Posterior vena cava (tissue), 2 donors: ENCODE measurements at regions of chr2 and their contacts with region 1.

Region 1: DNA sequence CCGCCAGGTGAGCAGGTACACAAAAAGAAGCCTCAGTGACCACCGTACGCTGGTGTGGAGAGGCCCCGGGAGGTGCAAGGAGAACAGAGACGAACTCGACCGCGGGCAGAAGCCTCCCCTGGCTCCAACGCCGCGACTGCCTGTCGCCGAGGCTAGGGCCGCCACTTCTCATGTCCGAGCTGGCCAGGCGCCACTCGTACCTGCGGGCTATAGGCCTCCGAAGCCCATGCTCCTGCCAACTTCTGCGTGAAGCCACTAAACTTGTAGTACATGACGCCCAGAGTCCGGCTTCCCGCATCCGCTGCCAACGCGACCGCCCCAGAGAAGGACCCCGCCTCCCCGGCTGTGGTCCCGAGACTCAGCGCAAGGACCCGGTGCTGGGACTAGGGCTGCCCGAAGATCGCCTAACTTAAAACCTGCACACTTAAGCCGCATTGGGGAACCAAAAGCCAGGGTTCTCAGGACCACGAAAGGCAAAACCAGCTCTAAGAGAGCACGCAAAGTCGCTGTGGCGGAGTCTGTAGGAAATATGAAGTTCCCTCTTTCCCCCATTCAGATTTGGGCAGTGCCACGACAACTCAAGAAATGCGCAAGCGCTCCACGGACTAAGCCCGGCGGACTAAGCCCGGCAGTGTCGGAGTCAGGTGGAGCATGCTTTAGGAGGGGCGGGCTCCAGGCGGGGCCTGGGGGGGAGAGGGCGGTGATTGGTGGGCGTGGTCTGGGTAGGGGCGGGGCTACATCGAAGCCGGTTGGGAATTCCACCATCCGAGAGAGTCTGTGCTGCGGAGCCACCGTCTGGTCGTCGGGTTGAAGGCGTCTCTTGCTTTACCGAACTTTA is at the start of gene COX7A2L:
- DNase-seq: peak; percentile 99
- total RNA-seq, gene COX7A2L: 58.1 to 58.7 TPM

Region 2: GRCh38 chr2:41791523-41791922 is 569.6 kb before region 1 on chr2:
- intact Hi-C with region 1: no loop called
- DNase-seq: no peak

Region 3: GRCh38 chr2:42153944-42154581 is 207.0 kb before region 1 on chr2:
- intact Hi-C with region 1: no loop called
- DNase-seq: no peak

Region 4: DNA sequence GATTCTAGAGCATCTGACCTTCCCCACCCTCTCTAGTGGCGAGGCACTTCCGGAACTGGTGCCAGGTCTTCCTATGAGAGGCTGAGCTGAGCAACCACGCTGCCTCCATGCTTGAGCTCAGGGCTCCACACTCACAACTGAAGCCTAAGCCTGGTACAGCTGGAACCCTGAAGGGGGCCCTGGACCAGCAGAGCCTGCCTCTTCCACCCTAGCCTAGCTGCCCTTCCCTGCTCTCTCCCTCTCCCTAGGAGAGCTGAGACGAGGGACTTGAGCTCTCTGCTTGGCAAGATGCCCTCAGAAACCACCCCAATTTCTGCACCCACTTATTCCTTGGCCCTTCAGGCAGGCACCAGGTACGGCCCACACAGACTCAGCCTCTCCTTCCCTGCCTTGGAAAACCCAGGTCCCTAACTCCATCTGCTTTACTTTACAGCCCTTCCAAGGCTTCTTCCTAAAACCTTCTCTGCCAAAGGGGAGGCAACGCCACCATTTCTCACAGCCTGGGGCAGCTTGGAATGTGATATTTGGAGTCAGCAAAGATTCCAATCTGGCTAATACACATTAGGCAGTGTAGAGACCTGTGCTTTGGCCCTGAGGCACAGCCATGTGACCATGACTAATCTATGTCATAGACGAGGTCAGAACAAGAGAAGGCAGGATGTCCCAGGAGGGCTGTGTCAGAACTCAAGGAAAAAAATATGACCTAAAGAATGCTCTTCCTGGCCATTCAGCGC is 18.9 kb before region 1 on chr2:
- intact Hi-C with region 1: loop called in 1 of 2 experiments (anchors 1 kb)
- DNase-seq: peak; percentile 88

Region 5: GRCh38 chr2:42386684-42387083 is 25.6 kb after region 1 on chr2:
- intact Hi-C with region 1: no loop called
- DNase-seq: no peak

Region 6: DNA sequence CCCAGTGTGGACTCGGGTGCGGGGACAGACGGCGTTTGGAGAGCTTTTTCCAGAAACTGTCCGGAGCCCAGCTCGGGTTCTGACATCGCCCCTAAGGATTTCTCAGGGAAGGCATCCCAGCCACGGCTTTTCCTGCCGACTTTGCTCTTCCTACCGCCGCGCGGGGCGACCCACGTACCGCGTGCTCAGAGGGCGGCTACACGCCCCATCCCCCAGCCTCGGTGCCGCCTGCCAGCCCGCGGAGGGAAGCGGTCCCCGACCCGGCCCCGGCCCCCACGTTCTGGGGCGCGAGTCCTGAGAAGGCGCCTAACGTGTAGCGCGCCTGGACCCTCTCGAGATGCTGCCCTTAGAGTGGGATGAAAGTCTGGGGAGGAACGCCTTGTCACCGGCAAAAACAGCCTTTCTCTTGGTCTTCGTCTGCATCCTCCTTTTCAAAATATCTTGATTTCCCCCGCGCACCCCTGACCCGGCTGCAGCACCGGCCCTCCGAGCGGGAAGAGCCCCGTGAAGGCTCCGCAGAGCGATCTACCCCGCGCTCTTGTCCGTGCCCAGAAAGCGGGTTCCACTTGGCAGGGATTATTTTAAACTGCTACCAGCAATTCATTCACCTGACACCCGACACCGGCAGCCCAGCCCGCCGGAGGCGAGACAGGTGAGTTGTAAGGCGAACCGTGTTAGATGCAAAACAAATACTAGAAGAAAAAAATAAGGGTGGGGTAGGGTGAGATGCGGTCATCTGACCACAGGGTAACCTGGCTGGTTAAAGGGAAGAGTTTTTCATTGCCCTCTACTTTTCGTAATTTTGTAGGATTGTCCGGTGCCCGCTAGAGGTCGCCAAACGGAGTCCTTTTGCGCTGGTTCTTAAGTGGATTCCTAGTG is 133.5 kb after region 1 on chr2:
- intact Hi-C with region 1: no loop called
- DNase-seq: peak; percentile 88